ENCODE measurements at regions of chr10 and their contacts with region 1.

Region 1: GRCh38 chr10:30687698-30688219 is 58.2 kb upstream of the LYZL2 start:
- DNase-seq: peak; percentile 63 to 83 (median 70)
- H3K4me3 ChIP-seq: no peak overlapping the region
- H3K4me3 Mint-ChIP-seq: no peak overlapping the region
- H3K27ac ChIP-seq: no peak overlapping the region
- H3K27ac Mint-ChIP-seq: no peak overlapping the region
- H3K4me1 ChIP-seq: no peaks in the 10 kb centered on the region
- H3K4me1 Mint-ChIP-seq: peaks cover 0 to 8% (median 4%) of the 10 kb centered on the region in 3 donors
- H3K27me3 ChIP-seq: peaks cover 5% of the 10 kb centered on the region
- H3K27me3 Mint-ChIP-seq: peaks cover 10 to 45% of the 10 kb centered on the region in 2 donors

Region 2: DNA sequence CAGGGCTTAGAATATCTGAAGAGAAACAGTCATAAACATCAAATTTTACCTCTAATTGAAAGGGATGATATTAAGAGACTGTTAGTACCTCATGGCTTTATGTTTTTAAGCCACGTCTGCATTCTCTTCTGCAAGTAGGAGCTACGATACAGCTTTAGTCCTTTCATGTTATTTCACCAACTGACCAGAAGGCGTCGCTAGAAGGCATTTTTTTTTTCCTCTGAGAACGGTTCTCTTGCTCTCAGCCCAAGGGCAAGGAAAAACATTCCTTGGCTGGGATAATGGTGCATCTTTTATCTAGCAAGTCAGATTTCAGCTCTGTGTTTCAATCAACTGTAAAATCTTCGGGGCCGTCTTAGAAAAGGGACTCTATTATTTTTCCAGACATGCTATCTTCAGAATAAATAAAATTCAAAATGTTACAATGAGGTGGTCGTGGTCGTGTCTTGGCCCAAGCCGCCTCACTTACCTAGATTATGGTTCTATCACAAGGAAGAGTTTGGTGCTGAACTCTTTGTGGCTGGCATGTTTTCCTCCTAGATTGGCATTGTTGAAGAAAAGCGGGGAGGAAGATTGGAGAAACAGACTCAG is 16.6 kb before region 1 on chr10:
- CTCF ChIA-PET with region 1: interaction called, 11 read pairs
- POLR2A ChIA-PET with region 1: no interaction called
- DNase-seq: peak in 3 of 5 donors; percentile 26 to 53 (median 40)
- H3K4me3 ChIP-seq: no peak overlapping the region
- H3K4me3 Mint-ChIP-seq: peak overlapping the region; percentile 24 to 79 (median 71)
- H3K27ac ChIP-seq: no peak overlapping the region
- H3K27ac Mint-ChIP-seq: no peak overlapping the region
- H3K4me1 ChIP-seq: no peaks in the 10 kb centered on the region
- H3K4me1 Mint-ChIP-seq: peaks cover 6 to 9% (median 9%) of the 10 kb centered on the region in 3 donors
- H3K27me3 ChIP-seq: no peaks in the 10 kb centered on the region
- H3K27me3 Mint-ChIP-seq: peaks cover 13 to 30% of the 10 kb centered on the region in 2 donors

Region 3: DNA sequence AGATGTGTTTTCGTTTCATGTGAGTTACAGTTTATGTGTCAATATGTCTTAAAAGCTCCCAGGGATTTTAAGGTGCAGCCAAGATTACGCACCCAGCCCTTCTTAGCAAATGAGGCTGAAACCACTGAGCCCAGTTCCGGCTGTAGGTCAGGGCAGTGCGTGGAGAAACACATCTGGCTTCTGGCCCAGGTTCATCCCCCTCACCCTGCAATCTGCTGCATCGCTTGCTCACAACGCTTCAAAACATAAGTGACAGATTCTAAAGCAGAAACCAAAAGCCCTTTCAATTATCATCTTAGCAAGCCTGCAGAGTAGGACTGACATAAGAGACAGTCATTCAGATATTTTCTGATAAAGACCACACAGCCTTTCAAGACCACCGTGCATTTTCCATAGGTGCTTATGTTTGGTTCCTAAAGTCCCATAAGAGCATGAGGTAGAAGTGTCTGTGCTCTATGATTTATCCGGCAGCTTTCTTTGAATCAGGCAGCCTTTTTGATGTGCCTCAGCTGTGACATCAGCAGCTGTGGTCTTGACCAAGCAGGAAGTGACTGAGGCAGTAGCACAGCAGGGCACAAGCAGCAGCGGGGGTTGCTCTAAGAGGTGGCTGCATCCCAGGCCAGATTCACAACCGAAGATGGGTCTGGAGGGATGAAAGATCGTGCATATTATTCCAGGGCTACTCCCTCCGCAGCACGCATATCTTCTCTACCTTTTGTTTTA is 13.9 kb after region 1 on chr10:
- CTCF ChIA-PET with region 1: interaction called, 13 read pairs
- POLR2A ChIA-PET with region 1: no interaction called
- DNase-seq: peak; percentile 40 to 84 (median 79)
- H3K4me3 ChIP-seq: peak overlapping the region; percentile 19
- H3K4me3 Mint-ChIP-seq: peak overlapping the region; percentile 77 to 90 (median 86)
- H3K27ac ChIP-seq: peak overlapping the region; percentile 40
- H3K27ac Mint-ChIP-seq: peak overlapping the region; percentile 95 to 99 (median 98)
- H3K4me1 ChIP-seq: peaks cover 85% of the 10 kb centered on the region
- H3K4me1 Mint-ChIP-seq: peaks cover 77 to 89% (median 89%) of the 10 kb centered on the region in 3 donors
- H3K27me3 ChIP-seq: no peaks in the 10 kb centered on the region
- H3K27me3 Mint-ChIP-seq: no peaks in the 10 kb centered on the region

Region 4: DNA sequence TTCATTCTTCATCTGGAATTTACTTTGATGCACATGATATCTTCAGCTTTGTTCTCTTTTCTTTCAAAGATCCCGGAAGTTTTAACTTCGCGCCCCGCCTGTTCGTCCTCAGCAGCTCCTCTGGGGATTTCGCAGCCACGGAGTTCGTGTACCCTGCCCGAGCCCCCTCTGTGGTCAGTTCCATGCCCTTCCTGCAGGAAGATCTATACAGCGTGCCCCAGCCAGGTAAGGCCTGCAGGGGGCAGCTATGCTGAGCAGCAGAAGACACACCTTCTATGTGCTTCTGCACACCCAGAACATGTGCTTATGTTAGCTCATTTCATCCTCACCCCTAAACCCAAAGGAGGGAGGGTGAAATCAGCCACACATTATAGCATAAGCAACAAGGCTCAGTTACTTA is 21.5 kb after region 1 on chr10:
- CTCF ChIA-PET with region 1: interaction called, 18 read pairs
- POLR2A ChIA-PET with region 1: no interaction called
- DNase-seq: no peak
- H3K4me3 ChIP-seq: no peak overlapping the region
- H3K4me3 Mint-ChIP-seq: peak overlapping the region in 1 of 7 donors; percentile 6
- H3K27ac ChIP-seq: no peak overlapping the region
- H3K27ac Mint-ChIP-seq: peak overlapping the region in 2 of 8 donors; percentile 15 to 41
- H3K4me1 ChIP-seq: peaks cover 23% of the 10 kb centered on the region
- H3K4me1 Mint-ChIP-seq: peaks cover 17 to 25% (median 21%) of the 10 kb centered on the region in 3 donors
- H3K27me3 ChIP-seq: no peaks in the 10 kb centered on the region
- H3K27me3 Mint-ChIP-seq: no peaks in the 10 kb centered on the region

Region 5: DNA sequence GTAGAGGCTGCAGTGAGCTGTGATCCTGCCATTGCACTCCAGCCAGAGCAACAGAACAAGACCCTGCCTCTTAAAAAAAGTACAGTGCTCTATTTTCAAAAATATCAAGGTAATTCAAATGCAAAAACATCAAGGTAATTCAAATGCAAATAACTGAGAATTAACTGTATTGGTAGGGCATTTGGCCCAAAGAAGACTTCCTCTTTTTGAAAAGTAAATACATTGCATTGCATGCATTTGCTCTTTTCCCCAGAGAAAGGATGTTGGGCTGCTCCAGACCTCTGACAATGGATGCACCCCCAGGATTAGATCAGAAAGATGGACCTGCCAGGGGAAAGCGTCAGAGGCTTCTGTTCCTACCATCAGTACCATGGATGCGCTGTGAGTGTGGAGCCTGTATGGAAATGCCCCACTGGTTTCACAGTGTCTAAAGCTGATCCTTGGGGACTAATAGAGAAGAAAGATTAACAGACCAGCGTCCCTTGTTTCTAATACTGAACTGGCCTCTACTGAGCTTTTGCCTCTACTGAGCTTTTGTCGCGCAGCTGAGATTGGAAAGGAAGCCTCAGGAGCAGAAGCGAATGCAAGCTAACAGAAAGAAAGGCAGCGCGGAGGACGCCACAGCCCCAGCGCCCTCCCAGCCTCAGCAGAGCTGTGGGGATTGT is 35.3 kb after region 1 on chr10:
- CTCF ChIA-PET with region 1: interaction called, 74 read pairs
- POLR2A ChIA-PET with region 1: interaction called, 3 read pairs
- DNase-seq: no peak
- H3K4me3 ChIP-seq: no peak overlapping the region
- H3K4me3 Mint-ChIP-seq: no peak overlapping the region
- H3K27ac ChIP-seq: no peak overlapping the region
- H3K27ac Mint-ChIP-seq: peak overlapping the region in 1 of 8 donors; percentile 72
- H3K4me1 ChIP-seq: no peaks in the 10 kb centered on the region
- H3K4me1 Mint-ChIP-seq: peaks cover 0 to 9% (median 2%) of the 10 kb centered on the region in 3 donors
- H3K27me3 ChIP-seq: no peaks in the 10 kb centered on the region
- H3K27me3 Mint-ChIP-seq: peaks cover 0 to 1% of the 10 kb centered on the region in 2 donors

Region 6: GRCh38 chr10:30840406-30841050 is 152.8 kb after region 1 on chr10:
- CTCF ChIA-PET with region 1: no interaction called
- POLR2A ChIA-PET with region 1: no interaction called
- DNase-seq: no peak
- H3K4me3 ChIP-seq: no peak overlapping the region
- H3K4me3 Mint-ChIP-seq: no peak overlapping the region
- H3K27ac ChIP-seq: no peak overlapping the region
- H3K27ac Mint-ChIP-seq: no peak overlapping the region
- H3K4me1 ChIP-seq: no peaks in the 10 kb centered on the region
- H3K4me1 Mint-ChIP-seq: no peaks in the 10 kb centered on the region
- H3K27me3 ChIP-seq: no peaks in the 10 kb centered on the region
- H3K27me3 Mint-ChIP-seq: peaks cover 0 to 3% of the 10 kb centered on the region in 2 donors

Measured in CD8-positive, alpha-beta memory T cell (primary cell).